ENCODE measurements at regions of chr2 and their contacts with region 1.

Region 1: GRCh38 chr2:230658877-230659652 is 53.6 kb upstream of the CAB39 start:
- DNase-seq: peak; percentile 87
- H3K4me3 Mint-ChIP-seq: peak overlapping the region; percentile 73
- H3K27ac Mint-ChIP-seq: peak overlapping the region; percentile 94
- H3K4me1 Mint-ChIP-seq: peaks cover 86% of the 10 kb centered on the region
- H3K27me3 Mint-ChIP-seq: no peaks in the 10 kb centered on the region

Region 2: GRCh38 chr2:229921892-229922445 is 737.1 kb before region 1 on chr2 and contains the start of gene TRIP12:
- CTCF ChIA-PET with region 1: no interaction called
- intact Hi-C with region 1: loop called (anchors 2 kb)
- DNase-seq: peak; percentile 91
- H3K4me3 Mint-ChIP-seq: peak within 1 kb of the TSS; percentile 90
- H3K27ac Mint-ChIP-seq: peak within 1 kb of the TSS; percentile 99
- H3K4me1 Mint-ChIP-seq: peaks cover 34% of the 10 kb centered on the region
- H3K27me3 Mint-ChIP-seq: no peaks in the 10 kb centered on the region
- total RNA-seq, gene TRIP12: 188 to 190 TPM

Region 3: GRCh38 chr2:230326453-230327417 is 332.3 kb before region 1 on chr2 and contains the start of gene SP140L:
- CTCF ChIA-PET with region 1: no interaction called
- intact Hi-C with region 1: loop called (anchors 5 kb)
- DNase-seq: peak; percentile 88
- H3K4me3 Mint-ChIP-seq: peak within 1 kb of the TSS; percentile 96
- H3K27ac Mint-ChIP-seq: peak within 1 kb of the TSS; percentile 99
- H3K4me1 Mint-ChIP-seq: peaks cover 60% of the 10 kb centered on the region
- H3K27me3 Mint-ChIP-seq: no peaks in the 10 kb centered on the region
- total RNA-seq, gene SP140L: 41.8 to 44.7 TPM

Region 4: DNA sequence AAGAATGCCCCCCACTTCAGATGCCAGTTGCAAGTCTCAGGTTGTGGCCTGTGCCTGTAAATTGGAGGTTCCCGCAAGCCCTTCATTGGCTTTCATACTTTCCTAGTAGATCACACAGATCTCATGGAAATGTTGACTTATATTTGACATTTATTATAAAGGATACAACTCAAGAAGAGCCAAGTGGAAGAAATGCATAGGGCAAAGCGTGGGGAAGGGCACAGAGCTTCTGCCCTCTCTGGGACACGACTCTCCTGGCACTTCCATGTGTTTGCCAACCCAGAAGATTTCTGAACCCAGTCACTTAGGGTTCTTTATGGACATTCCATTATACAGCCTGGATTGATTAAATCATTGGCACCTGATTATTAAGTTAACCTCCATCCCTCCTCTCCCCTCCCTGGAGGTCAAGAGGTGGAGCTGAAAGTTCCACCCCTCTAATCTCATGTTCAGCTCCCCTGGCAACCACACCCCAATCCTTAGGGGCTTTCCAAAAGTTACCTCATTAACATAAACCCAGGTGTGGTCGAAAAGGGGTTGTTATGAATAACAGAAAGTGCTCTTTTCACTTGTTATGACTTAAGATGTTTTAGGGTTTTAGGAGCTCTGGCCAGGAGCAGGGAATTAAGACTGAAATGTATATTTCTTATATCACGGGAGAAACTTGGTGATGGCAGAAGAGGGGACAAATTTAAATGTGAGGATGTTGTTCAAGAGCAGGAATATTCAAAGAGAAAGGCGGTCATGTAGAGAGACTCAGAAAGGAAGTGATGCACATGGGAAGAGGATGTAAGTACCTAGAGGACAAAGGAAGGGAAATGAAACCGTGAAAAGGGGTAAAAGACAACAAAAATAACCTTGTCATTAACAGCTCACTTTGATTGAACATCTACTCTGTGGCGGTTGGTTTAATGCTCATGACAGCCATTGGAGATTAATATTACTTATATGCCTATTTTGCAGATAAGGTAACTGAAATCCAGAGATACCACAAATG is 211.3 kb before region 1 on chr2:
- CTCF ChIA-PET with region 1: interaction called, 3 read pairs
- intact Hi-C with region 1: loop called (anchors 1 kb)
- DNase-seq: peak; percentile 60
- H3K4me3 Mint-ChIP-seq: peak overlapping the region; percentile 44
- H3K27ac Mint-ChIP-seq: peak overlapping the region; percentile 89
- H3K4me1 Mint-ChIP-seq: peaks cover 50% of the 10 kb centered on the region
- H3K27me3 Mint-ChIP-seq: no peaks in the 10 kb centered on the region

Region 5: DNA sequence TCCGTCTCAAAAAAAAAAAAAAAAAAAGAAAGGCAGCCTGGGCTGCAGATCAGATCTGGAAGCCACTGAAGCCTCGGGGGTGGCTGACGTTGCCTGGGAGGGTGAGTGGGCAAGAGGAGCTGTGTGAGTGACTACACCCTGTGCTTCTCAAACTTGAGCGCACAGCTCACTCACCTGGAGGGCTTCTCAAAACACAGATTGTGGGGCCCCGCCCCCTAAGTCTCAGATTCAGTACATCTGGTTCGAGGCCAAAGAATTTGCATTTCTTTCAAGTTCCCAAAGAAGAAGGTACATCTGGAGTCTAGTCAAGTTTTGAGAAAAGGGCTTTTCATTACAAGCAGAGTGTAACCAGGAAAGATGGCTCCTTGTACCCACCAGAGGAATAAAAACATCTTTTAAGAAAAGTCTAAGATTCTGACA is 44.1 kb before region 1 on chr2:
- CTCF ChIA-PET with region 1: interaction called, 6 read pairs
- intact Hi-C with region 1: loop called (anchors 1 kb)
- DNase-seq: peak; percentile 79
- H3K4me3 Mint-ChIP-seq: no peak overlapping the region
- H3K27ac Mint-ChIP-seq: peak overlapping the region; percentile 71
- H3K4me1 Mint-ChIP-seq: peaks cover 33% of the 10 kb centered on the region
- H3K27me3 Mint-ChIP-seq: no peaks in the 10 kb centered on the region

Region 6: GRCh38 chr2:230643576-230644291 is 15.3 kb before region 1 on chr2:
- CTCF ChIA-PET with region 1: interaction called, 17 read pairs
- intact Hi-C with region 1: loop called (anchors 1 kb)
- DNase-seq: peak; percentile 83
- H3K4me3 Mint-ChIP-seq: peak overlapping the region; percentile 47
- H3K27ac Mint-ChIP-seq: peak overlapping the region; percentile 96
- H3K4me1 Mint-ChIP-seq: peaks cover 33% of the 10 kb centered on the region
- H3K27me3 Mint-ChIP-seq: no peaks in the 10 kb centered on the region

Region 7: DNA sequence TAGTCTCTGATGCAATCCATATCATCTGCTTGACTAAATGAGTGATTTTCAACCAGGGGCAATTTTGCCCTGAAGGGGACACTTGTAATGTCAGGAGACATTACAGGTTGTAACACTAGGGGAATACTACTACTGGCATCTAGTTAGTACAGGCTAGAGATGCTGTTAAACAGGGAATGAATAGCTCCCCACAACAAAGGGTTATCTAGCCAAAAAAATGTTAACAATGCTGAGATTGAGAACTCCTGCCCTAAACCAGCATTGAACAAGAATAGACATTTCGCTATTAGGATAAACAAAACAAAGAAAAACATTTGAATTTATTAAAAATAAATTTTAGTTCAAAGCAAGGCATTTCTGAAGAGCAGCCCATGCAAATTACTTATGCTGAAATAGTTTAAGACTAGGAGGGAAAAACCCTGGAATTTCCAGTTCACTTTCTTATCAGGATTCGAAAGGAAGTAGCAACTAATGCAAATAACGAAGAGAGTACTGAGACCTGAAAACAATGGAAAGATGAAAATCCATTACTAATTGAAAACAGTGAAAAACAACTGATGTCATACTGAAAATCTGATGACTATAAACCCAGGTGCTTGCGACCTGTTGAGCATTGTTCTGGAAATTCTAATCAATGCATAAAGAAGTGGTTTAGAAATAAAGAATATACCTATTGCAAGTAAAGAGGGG is 106.7 kb after region 1 on chr2:
- CTCF ChIA-PET with region 1: interaction called, 3 read pairs
- intact Hi-C with region 1: loop called (anchors 2 kb)
- DNase-seq: no peak
- H3K4me3 Mint-ChIP-seq: no peak overlapping the region
- H3K27ac Mint-ChIP-seq: peak overlapping the region; percentile 85
- H3K4me1 Mint-ChIP-seq: peaks cover 64% of the 10 kb centered on the region
- H3K27me3 Mint-ChIP-seq: no peaks in the 10 kb centered on the region